ENCODE measurements at regions of chr1 and their contacts with region 1.

Region 1: GRCh38 chr1:198205016-198205684 is 48.4 kb downstream of the NEK7 start:
- DNase-seq: peak in 2 of 5 donors; percentile 26 to 55
- ATAC-seq: peak; percentile 43 to 74 (median 56)
- H3K4me3 ChIP-seq: peak overlapping the region in 3 of 12 donors; percentile 5 to 7 (median 5)
- H3K27ac ChIP-seq: peak overlapping the region in 11 of 12 donors; percentile 3 to 60 (median 42)
- H3K4me1 ChIP-seq: peaks cover 0 to 65% (median 40%) of the 10 kb centered on the region in 12 donors
- H3K27me3 ChIP-seq: no peaks in the 10 kb centered on the region
- CTCF ChIP-seq: no peak
- POLR2A ChIP-seq: no peak

Region 2: GRCh38 chr1:198174297-198174696 is 30.9 kb before region 1 on chr1:
- intact Hi-C with region 1: loop called in 1 of 10 experiments (anchors 5 kb)
- DNase-seq: no peak
- ATAC-seq: no peak
- H3K4me3 ChIP-seq: no peak overlapping the region
- H3K27ac ChIP-seq: peak overlapping the region in 2 of 12 donors; percentile 2 to 15
- H3K4me1 ChIP-seq: peaks cover 4 to 98% (median 89%) of the 10 kb centered on the region in 12 donors
- H3K27me3 ChIP-seq: no peaks in the 10 kb centered on the region
- CTCF ChIP-seq: no peak
- POLR2A ChIP-seq: no peak

Region 3: DNA sequence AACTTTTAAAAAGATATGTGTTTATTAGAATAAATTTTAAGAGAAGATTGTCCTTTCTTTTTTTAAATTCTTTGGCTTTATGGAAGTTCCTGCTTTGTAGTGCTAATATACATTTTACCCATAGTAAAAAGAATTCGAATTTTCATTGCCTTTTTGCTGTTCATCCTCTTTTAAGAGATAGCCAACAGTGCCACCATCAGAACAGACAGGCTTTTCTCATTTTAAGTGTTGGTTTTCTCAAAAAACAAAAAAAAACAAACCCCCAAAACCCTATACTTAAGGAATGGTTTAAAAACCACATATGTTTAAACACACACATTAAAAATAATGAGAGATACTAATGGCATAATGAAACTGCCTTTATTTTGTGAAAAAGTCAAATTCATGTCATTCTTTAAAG is 70.4 kb after region 1 on chr1:
- intact Hi-C with region 1: no loop called
- DNase-seq: no peak
- ATAC-seq: no peak
- H3K4me3 ChIP-seq: no peak overlapping the region
- H3K27ac ChIP-seq: no peak overlapping the region
- H3K4me1 ChIP-seq: peaks cover 4 to 46% (median 26%) of the 10 kb centered on the region in 12 donors
- H3K27me3 ChIP-seq: no peaks in the 10 kb centered on the region
- CTCF ChIP-seq: no peak
- POLR2A ChIP-seq: no peak

Region 4: GRCh38 chr1:198287916-198288315 is 82.8 kb after region 1 on chr1:
- intact Hi-C with region 1: loop called in 1 of 10 experiments (anchors 5 kb)
- DNase-seq: no peak
- ATAC-seq: no peak
- H3K4me3 ChIP-seq: no peak overlapping the region
- H3K27ac ChIP-seq: no peak overlapping the region
- H3K4me1 ChIP-seq: peaks cover 0 to 36% (median 12%) of the 10 kb centered on the region in 12 donors
- H3K27me3 ChIP-seq: no peaks in the 10 kb centered on the region
- CTCF ChIP-seq: no peak
- POLR2A ChIP-seq: no peak

Region 5: GRCh38 chr1:198298640-198299039 is 93.5 kb after region 1 on chr1:
- intact Hi-C with region 1: no loop called
- DNase-seq: no peak
- ATAC-seq: no peak
- H3K4me3 ChIP-seq: no peak overlapping the region
- H3K27ac ChIP-seq: no peak overlapping the region
- H3K4me1 ChIP-seq: peaks cover 0 to 12% (median 0%) of the 10 kb centered on the region in 12 donors
- H3K27me3 ChIP-seq: no peaks in the 10 kb centered on the region
- CTCF ChIP-seq: no peak
- POLR2A ChIP-seq: no peak

Measured in heart left ventricle (tissue), 16 donors.